ENCODE measurements at regions of chr1 and their contacts with region 1.

Region 1: GRCh38 chr1:244652699-244653466 is at the start of gene DESI2:
- DNase-seq: peak; percentile 99
- H3K4me3 ChIP-seq: peak within 1 kb of the TSS; percentile 79 to 95 (median 89)
- H3K27ac ChIP-seq: peak within 1 kb of the TSS; percentile 83
- H3K4me1 ChIP-seq: peaks cover 17% of the 10 kb centered on the region
- H3K27me3 ChIP-seq: no peaks in the 10 kb centered on the region
- CTCF ChIP-seq: peak; percentile 9 to 52
- total RNA-seq, gene DESI2: 38.5 to 63.3 TPM

Region 2: DNA sequence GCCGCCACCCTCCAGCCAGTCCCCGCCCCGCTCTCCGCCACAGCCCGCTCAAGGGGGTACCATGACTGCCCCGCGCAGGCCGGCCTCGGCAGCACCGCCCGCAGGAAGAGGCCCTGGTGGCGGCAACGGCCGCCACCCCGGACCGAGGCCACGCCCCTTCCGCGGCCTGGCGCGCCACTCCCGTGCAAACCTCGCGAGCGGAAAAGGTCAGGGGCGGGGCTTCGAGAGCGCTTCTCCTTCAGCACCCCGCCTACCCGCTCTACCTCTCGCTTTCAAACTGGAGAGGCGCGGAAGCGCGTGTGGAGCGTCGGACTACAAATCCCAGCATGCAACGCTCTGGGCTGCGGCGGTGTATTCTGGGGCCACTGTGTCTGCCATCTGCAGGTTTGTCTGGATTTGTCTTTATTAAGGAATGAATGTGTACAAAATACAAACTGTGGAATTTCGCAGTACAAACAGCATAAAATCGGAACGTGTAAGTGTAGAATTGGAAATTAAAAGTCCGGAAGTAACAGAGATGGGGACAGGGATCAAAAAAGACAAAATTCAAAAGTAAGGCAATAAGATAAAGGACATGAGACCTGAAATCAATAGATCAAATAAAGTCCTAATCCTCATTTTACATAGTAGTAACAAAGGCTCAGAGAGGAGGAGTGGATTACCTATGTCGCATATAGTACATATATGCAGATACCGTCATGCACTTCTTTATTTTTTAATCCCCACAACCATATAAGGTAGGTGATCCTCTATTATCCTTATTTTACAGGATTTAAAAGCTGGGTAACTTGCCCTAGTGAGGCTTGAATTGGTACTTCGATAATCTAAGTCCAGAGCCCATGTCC is 200.7 kb before region 1 on chr1:
- CTCF ChIA-PET with region 1: no interaction called
- dilution Hi-C with region 1: no loop called
- in situ Hi-C with region 1: no loop called
- intact Hi-C with region 1: loop called (anchors 1 kb)
- DNase-seq: peak; percentile 99
- H3K4me3 ChIP-seq: peak overlapping the region; percentile 49 to 97 (median 50)
- H3K27ac ChIP-seq: peak overlapping the region; percentile 31
- H3K4me1 ChIP-seq: peaks cover 15% of the 10 kb centered on the region
- H3K27me3 ChIP-seq: no peaks in the 10 kb centered on the region
- CTCF ChIP-seq: peak; percentile 32 to 34

Region 3: GRCh38 chr1:244735404-244735803 is 82.5 kb after region 1 on chr1:
- CTCF ChIA-PET with region 1: no interaction called
- dilution Hi-C with region 1: no loop called
- in situ Hi-C with region 1: no loop called
- intact Hi-C with region 1: no loop called
- DNase-seq: peak; percentile 83
- H3K4me3 ChIP-seq: no peak overlapping the region
- H3K27ac ChIP-seq: peak overlapping the region; percentile 49
- H3K4me1 ChIP-seq: peaks cover 12% of the 10 kb centered on the region
- H3K27me3 ChIP-seq: no peaks in the 10 kb centered on the region
- CTCF ChIP-seq: no peak

Region 4: GRCh38 chr1:244835276-244836134 is 182.6 kb after region 1 on chr1 and contains the start of gene COX20:
- CTCF ChIA-PET with region 1: no interaction called
- dilution Hi-C with region 1: no loop called
- in situ Hi-C with region 1: no loop called
- intact Hi-C with region 1: loop called (anchors 1 kb)
- DNase-seq: peak; percentile 86
- H3K4me3 ChIP-seq: peak within 1 kb of the TSS; percentile 72 to 83 (median 81)
- H3K27ac ChIP-seq: peak within 1 kb of the TSS; percentile 94
- H3K4me1 ChIP-seq: peaks cover 12% of the 10 kb centered on the region
- H3K27me3 ChIP-seq: no peaks in the 10 kb centered on the region
- CTCF ChIP-seq: no peak
- total RNA-seq, gene COX20: 13.7 to 35.4 TPM

Region 5: DNA sequence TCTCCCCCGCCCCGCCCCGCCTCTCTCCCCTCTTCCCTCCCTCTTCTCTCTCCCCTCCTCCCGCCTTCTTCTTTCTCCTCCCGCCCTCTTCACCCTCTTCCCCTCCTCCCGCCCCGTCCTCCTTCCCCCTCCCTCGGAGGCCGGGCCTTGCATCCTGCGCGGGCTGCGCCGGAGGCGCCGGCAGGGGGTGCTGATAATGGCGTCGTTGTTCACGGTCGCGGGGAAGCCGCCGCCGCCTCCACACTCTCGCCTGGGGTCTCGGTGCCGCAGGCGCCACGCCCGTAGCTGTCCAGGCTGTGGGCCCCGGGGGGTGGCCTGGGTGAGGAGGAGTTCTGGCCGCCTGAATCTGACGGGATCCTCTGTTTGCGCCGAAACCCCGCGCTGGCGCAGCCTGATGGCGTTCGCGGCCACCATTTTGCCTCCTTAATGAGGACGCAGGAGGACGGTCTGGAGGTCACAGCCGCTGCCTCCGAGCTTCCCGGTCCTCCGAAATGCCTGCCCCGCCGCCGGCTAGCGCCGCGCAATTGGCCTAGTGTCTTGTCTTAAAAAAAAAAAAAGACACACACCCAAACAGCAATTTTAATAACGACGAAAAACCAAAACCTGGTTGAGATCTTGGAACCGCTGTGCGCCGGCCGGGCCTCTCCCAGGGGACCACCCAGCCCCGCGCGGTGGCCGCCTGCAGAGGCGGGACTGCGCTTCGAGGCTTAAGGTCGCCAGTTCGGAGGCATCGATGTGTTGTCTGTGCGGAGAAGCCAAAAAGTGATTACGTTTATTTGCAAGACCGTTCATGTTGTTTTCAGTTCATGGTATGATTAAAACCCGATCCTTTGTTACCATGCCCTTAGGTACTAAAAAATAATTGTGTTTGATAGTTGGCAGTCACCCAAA is 318.0 kb after region 1 on chr1:
- CTCF ChIA-PET with region 1: no interaction called
- dilution Hi-C with region 1: no loop called
- in situ Hi-C with region 1: loop called in 1 of 2 experiments (anchors 25 kb)
- intact Hi-C with region 1: loop called (anchors 2 kb)
- DNase-seq: peak; percentile 96
- H3K4me3 ChIP-seq: peak overlapping the region; percentile 62 to 75 (median 68)
- H3K27ac ChIP-seq: peak overlapping the region; percentile 92
- H3K4me1 ChIP-seq: peaks cover 3% of the 10 kb centered on the region
- H3K27me3 ChIP-seq: no peaks in the 10 kb centered on the region
- CTCF ChIP-seq: peak; percentile 3 to 62